ENCODE measurements at regions of chr16 and their contacts with region 1.

Region 1: GRCh38 chr16:70395345-70395901 is 43.5 kb downstream of the ST3GAL2 start:
- DNase-seq: peak; percentile 57 to 95
- H3K4me3 ChIP-seq: no peak overlapping the region
- H3K27ac ChIP-seq: no peak overlapping the region
- H3K4me1 ChIP-seq: no peaks in the 10 kb centered on the region
- H3K27me3 ChIP-seq: no peaks in the 10 kb centered on the region
- CTCF ChIP-seq: peak; percentile 92 to 98 (median 93)
- EP300 ChIP-seq: no peak
- POLR2A ChIP-seq: no peak
- RAD21 ChIP-seq: peak; percentile 93

Region 2: GRCh38 chr16:70304892-70305448 is 90.5 kb before region 1 on chr16:
- CTCF ChIA-PET with region 1: no interaction called
- POLR2A ChIA-PET with region 1: no interaction called
- DNase-seq: no peak
- H3K4me3 ChIP-seq: no peak overlapping the region
- H3K27ac ChIP-seq: no peak overlapping the region
- H3K4me1 ChIP-seq: no peaks in the 10 kb centered on the region
- H3K27me3 ChIP-seq: no peaks in the 10 kb centered on the region
- CTCF ChIP-seq: no peak
- EP300 ChIP-seq: no peak
- POLR2A ChIP-seq: no peak
- RAD21 ChIP-seq: no peak

Region 3: GRCh38 chr16:70372921-70373728 is 22.3 kb before region 1 on chr16:
- CTCF ChIA-PET with region 1: interaction called, 11 read pairs
- POLR2A ChIA-PET with region 1: interaction called, 7 read pairs
- DNase-seq: no peak
- H3K4me3 ChIP-seq: no peak overlapping the region
- H3K27ac ChIP-seq: no peak overlapping the region
- H3K4me1 ChIP-seq: no peaks in the 10 kb centered on the region
- H3K27me3 ChIP-seq: no peaks in the 10 kb centered on the region
- CTCF ChIP-seq: no peak
- EP300 ChIP-seq: no peak
- POLR2A ChIP-seq: no peak
- RAD21 ChIP-seq: no peak

Region 4: GRCh38 chr16:70407811-70408274 is 12.4 kb after region 1 on chr16:
- CTCF ChIA-PET with region 1: interaction called, 23 read pairs
- POLR2A ChIA-PET with region 1: interaction called, 3 read pairs
- DNase-seq: no peak
- H3K4me3 ChIP-seq: no peak overlapping the region
- H3K27ac ChIP-seq: no peak overlapping the region
- H3K4me1 ChIP-seq: peaks cover 2 to 11% (median 7%) of the 10 kb centered on the region in 4 experiments
- H3K27me3 ChIP-seq: no peaks in the 10 kb centered on the region
- CTCF ChIP-seq: no peak
- EP300 ChIP-seq: no peak
- POLR2A ChIP-seq: no peak
- RAD21 ChIP-seq: no peak

Region 5: GRCh38 chr16:70416748-70417616 is 21.6 kb after region 1 on chr16:
- CTCF ChIA-PET with region 1: interaction called, 22 read pairs
- POLR2A ChIA-PET with region 1: interaction called, 4 read pairs
- DNase-seq: no peak
- H3K4me3 ChIP-seq: no peak overlapping the region
- H3K27ac ChIP-seq: no peak overlapping the region
- H3K4me1 ChIP-seq: peaks cover 0 to 30% (median 20%) of the 10 kb centered on the region in 4 experiments; a peak in 6 of 7 replicates
- H3K27me3 ChIP-seq: no peaks in the 10 kb centered on the region
- CTCF ChIP-seq: no peak
- EP300 ChIP-seq: no peak
- POLR2A ChIP-seq: no peak
- RAD21 ChIP-seq: no peak

Region 6: GRCh38 chr16:70422270-70422897 is 27.0 kb after region 1 on chr16:
- CTCF ChIA-PET with region 1: interaction called, 22 read pairs
- POLR2A ChIA-PET with region 1: interaction called, 4 read pairs
- DNase-seq: no peak
- H3K4me3 ChIP-seq: no peak overlapping the region
- H3K27ac ChIP-seq: no peak overlapping the region
- H3K4me1 ChIP-seq: peaks cover 0 to 27% (median 19%) of the 10 kb centered on the region in 4 experiments; a peak in 6 of 7 replicates
- H3K27me3 ChIP-seq: no peaks in the 10 kb centered on the region
- CTCF ChIP-seq: no peak
- EP300 ChIP-seq: no peak
- POLR2A ChIP-seq: no peak
- RAD21 ChIP-seq: no peak

Region 7: GRCh38 chr16:70454222-70455034 is 59.0 kb after region 1 on chr16 and contains the start of gene FCSK:
- CTCF ChIA-PET with region 1: interaction called, 20 read pairs
- POLR2A ChIA-PET with region 1: interaction called, 4 read pairs
- DNase-seq: peak in 1 of 2 experiments; percentile 89
- H3K4me3 ChIP-seq: peak within 1 kb of the TSS; percentile 44 to 83 (median 78)
- H3K27ac ChIP-seq: peak within 1 kb of the TSS; percentile 100
- H3K4me1 ChIP-seq: peaks cover 0 to 2% (median 0%) of the 10 kb centered on the region in 4 experiments; a peak in 1 of 7 replicates
- H3K27me3 ChIP-seq: no peaks in the 10 kb centered on the region
- CTCF ChIP-seq: peak; percentile 46 to 62 (median 47); a peak in 3 of 4 replicates
- EP300 ChIP-seq: no peak
- POLR2A ChIP-seq: peak in 1 of 2 experiments; percentile 57; a peak in 2 of 3 replicates
- RAD21 ChIP-seq: peak in 1 of 2 experiments; percentile 36; a peak in 2 of 4 replicates
- total RNA-seq, gene FCSK: 3.4 and 4.6 TPM in 2 replicates

Region 8: DNA sequence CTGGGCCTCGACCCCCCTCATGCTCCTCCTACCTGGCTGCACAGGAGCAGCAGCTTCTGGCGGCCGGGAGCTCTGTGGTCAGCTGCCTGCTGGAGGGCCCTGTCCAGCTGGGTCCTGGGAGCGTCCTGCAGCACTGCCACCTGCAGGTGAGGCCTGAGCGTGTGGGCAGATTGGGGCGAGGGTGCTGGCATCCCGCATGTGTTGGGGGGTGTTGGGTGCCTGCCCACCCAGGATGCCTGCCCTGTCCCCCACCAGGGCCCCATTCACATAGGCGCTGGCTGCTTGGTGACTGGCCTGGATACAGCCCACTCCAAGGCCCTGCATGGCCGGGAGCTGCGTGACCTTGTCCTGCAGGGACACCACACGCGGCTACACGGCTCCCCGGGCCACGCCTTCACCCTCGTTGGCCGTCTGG is 75.5 kb after region 1 on chr16:
- CTCF ChIA-PET with region 1: interaction called, 180 read pairs
- POLR2A ChIA-PET with region 1: interaction called, 7 read pairs
- DNase-seq: peak in 1 of 2 experiments; percentile 74
- H3K4me3 ChIP-seq: no peak overlapping the region
- H3K27ac ChIP-seq: no peak overlapping the region
- H3K4me1 ChIP-seq: no peaks in the 10 kb centered on the region; a peak in 1 of 7 replicates
- H3K27me3 ChIP-seq: no peaks in the 10 kb centered on the region
- CTCF ChIP-seq: peak; percentile 80 to 91 (median 84)
- EP300 ChIP-seq: no peak
- POLR2A ChIP-seq: no peak
- RAD21 ChIP-seq: peak; percentile 69 to 80